Transverse colon (tissue), 4 donors: ENCODE measurements at regions of chr5 and their contacts with region 1.

Region 1: DNA sequence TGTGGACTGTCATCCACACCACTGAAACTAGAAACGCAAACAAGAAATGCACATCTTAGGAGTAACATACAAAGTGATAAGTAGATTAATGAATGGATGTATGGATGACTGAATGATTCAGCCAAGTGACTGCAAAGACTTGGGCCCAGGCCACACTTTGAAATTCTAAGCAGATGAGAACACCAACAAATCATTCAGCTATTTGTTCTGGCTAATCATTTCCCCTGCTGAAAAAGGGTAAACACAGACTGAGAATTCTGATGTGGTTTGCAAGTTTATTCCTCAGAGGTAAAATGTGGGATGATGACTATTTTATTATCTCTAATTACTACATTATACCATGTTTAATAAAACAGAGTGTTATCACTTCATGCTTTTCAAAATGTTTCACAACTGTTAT is 163.2 kb upstream of the ADAMTS16 start:
- DNase-seq: no peak
- H3K4me3 ChIP-seq: no peak overlapping the region
- H3K27ac ChIP-seq: no peak overlapping the region
- H3K4me1 ChIP-seq: no peaks in the 10 kb centered on the region
- H3K27me3 ChIP-seq: no peaks in the 10 kb centered on the region
- CTCF ChIP-seq: no peak
- EP300 ChIP-seq: no peak
- POLR2A ChIP-seq: no peak

Region 2: GRCh38 chr5:3542158-3542557 is 1434.7 kb before region 1 on chr5:
- in situ Hi-C with region 1: no loop called
- intact Hi-C with region 1: loop called (anchors 5 kb)
- DNase-seq: no peak
- H3K4me3 ChIP-seq: no peak overlapping the region
- H3K27ac ChIP-seq: no peak overlapping the region
- H3K4me1 ChIP-seq: no peaks in the 10 kb centered on the region
- H3K27me3 ChIP-seq: no peaks in the 10 kb centered on the region
- CTCF ChIP-seq: no peak
- EP300 ChIP-seq: no peak
- POLR2A ChIP-seq: no peak

Region 3: DNA sequence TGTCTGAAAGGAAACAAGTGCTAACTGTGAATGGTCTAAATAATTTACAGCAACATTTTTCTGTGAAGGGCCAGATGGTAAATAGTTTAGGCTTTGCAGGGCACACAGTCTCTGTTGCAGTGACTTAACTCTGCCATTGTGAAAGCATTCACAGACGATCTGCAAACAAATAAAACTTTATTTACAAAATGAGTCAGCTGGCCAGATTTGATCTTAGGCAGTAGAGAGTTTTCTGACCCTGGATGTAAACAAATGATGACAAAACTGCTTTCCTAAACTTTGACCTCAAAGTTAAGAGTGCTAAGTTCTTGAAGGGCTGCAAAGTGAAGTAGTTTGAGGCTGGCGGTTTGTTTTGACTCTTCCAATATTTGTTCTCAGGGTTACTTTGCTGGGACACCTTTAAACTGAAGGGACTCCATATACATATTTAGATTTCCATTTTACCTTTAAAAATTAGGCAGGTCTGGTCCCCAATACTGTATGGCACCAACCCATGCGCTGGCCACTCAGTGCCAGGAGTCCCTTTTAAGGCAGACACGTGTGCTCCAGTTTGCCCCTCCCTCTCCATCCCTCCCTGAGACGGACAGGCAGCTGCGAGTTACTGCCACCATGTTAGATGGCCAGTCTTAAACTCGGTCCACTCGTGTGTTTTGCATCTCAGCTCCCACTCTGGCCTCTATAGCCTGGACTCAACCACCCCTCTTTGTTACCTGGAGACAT is 159.2 kb after region 1 on chr5:
- in situ Hi-C with region 1: no loop called
- intact Hi-C with region 1: no loop called
- DNase-seq: no peak
- H3K4me3 ChIP-seq: no peak overlapping the region
- H3K27ac ChIP-seq: no peak overlapping the region
- H3K4me1 ChIP-seq: peaks cover 0 to 10% (median 5%) of the 10 kb centered on the region in 4 donors
- H3K27me3 ChIP-seq: peaks cover 22% of the 10 kb centered on the region
- CTCF ChIP-seq: no peak
- EP300 ChIP-seq: no peak
- POLR2A ChIP-seq: no peak